ENCODE measurements at regions of chr7 and their contacts with region 1.

Region 1: GRCh38 chr7:50812841-50813475 is 30.3 kb upstream of the GRB10 start:
- DNase-seq: peak; percentile 87 to 90
- H3K4me3 ChIP-seq: no peak overlapping the region
- H3K27ac ChIP-seq: no peak overlapping the region
- H3K4me1 ChIP-seq: peaks cover 12% of the 10 kb centered on the region
- H3K27me3 ChIP-seq: no peaks in the 10 kb centered on the region
- CTCF ChIP-seq: no peak

Region 2: GRCh38 chr7:50147951-50148808 is 664.8 kb before region 1 on chr7:
- CTCF ChIA-PET with region 1: no interaction called
- POLR2A ChIA-PET with region 1: no interaction called
- intact Hi-C with region 1: no loop called
- DNase-seq: no peak
- H3K4me3 ChIP-seq: no peak overlapping the region
- H3K27ac ChIP-seq: no peak overlapping the region
- H3K4me1 ChIP-seq: no peaks in the 10 kb centered on the region
- H3K27me3 ChIP-seq: peaks cover 25% of the 10 kb centered on the region; the same call in 1 of the 2 replicates
- CTCF ChIP-seq: no peak

Region 3: DNA sequence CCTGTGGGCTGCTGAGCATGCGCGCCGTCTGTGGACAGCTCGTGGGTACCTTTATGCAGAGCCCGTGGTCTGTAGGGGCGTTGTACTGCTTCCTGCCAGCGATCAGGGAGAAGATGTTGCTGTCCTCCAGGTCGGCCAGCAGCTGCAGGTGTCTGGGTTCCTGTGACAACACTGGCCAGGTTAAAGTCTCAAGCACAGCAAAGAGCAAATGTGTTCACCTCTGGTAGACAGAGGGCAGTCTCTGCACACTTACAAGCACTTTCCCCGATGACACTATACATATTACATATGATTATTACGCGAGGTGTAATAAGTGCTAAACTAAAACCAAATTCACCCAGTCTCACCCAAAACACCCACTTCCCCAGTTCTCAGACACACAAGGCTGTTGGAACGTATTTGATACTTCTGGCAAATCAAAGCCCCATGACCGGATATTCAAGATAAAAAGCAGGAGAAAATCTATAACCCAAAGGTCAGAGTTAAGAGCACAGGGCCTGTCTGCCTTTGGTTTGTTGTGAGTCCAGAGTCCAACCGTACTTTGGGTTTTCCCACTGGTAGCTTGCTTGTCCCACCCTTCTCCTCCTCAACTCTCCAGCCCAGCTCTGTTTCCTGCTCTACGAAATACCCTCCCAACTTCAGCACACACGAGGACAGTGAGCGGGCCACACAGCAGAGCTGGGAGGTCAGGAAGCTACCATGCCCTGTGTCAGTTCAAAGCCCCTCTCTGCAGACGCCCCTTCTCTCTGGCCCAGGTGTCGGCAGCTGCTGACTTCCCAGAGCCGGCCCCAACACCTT is 198.0 kb before region 1 on chr7:
- CTCF ChIA-PET with region 1: no interaction called
- POLR2A ChIA-PET with region 1: no interaction called
- intact Hi-C with region 1: no loop called
- DNase-seq: no peak
- H3K4me3 ChIP-seq: no peak overlapping the region
- H3K27ac ChIP-seq: no peak overlapping the region
- H3K4me1 ChIP-seq: peaks cover 18% of the 10 kb centered on the region
- H3K27me3 ChIP-seq: no peaks in the 10 kb centered on the region
- CTCF ChIP-seq: peak; percentile 43; the same call in 1 of the 2 replicates

Region 4: DNA sequence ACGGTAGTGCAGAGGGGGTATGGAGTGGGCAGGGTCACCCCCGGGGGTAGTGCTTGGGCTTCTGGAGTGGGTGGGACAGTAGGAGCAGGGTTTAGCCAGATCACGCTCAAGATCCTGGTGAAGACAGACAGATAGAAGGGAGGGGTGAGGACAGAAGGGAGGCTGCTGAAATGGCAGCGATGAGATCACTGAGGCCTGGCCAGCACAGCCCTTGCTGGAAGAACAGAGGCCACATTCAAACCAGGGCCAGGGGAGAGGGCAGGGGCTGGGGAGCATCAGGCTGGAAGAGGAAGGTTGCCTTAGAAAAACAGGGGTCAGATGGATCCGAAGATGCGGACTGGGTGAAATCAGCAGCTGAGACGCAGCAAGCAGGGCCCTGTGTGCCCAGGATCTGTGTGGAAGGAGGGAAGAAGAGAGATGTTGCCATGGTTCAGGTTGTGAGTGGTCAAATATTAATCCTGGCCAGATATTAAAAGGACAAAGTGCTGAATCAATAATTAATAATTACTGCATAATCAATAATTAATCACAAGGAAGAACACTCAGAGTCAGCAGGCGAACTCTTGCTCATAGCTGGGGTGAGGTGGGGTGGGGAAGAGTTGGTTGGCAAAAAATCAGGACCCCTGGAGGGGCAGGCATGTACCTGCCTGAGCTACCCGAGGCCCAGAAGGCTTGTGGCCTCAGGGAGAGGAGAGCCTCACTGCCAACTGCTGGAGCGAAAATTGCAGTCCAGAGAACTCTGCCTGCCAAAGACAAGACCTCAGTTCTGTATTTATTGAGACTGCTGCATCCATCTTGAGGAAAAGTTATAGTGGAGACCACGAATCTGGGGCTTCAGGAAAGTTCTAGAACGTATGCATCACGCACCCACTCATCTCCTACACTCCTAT is 136.0 kb before region 1 on chr7:
- CTCF ChIA-PET with region 1: no interaction called
- POLR2A ChIA-PET with region 1: no interaction called
- intact Hi-C with region 1: no loop called
- DNase-seq: no peak
- H3K4me3 ChIP-seq: no peak overlapping the region
- H3K27ac ChIP-seq: no peak overlapping the region
- H3K4me1 ChIP-seq: peaks cover 4% of the 10 kb centered on the region; the same call in 1 of the 2 replicates
- H3K27me3 ChIP-seq: no peaks in the 10 kb centered on the region
- CTCF ChIP-seq: no peak

Region 5: GRCh38 chr7:50978633-50979215 is 165.8 kb after region 1 on chr7:
- CTCF ChIA-PET with region 1: interaction called, 11 read pairs
- POLR2A ChIA-PET with region 1: no interaction called
- intact Hi-C with region 1: no loop called
- DNase-seq: no peak
- H3K4me3 ChIP-seq: no peak overlapping the region
- H3K27ac ChIP-seq: no peak overlapping the region
- H3K4me1 ChIP-seq: no peaks in the 10 kb centered on the region
- H3K27me3 ChIP-seq: no peaks in the 10 kb centered on the region
- CTCF ChIP-seq: peak; percentile 69

Region 6: DNA sequence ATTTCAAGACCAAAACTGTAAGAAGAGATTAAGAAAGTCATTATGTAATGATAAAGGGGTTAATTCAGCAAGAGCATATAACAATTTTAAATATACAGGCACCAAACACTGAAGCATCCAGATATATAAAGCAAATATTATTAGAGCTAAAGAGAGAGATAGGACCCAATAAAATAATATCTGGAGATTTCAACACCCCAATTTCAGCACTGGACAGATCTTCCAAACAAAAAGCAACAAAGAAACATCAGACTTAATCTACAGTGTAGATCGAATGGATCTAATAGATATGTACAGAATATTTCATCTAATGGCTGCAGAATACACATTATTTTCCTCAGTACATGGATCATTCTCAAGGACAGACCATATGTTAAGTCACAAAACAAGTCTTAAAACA is 352.4 kb after region 1 on chr7:
- CTCF ChIA-PET with region 1: no interaction called
- POLR2A ChIA-PET with region 1: no interaction called
- intact Hi-C with region 1: no loop called
- DNase-seq: no peak
- H3K4me3 ChIP-seq: no peak overlapping the region
- H3K27ac ChIP-seq: no peak overlapping the region
- H3K4me1 ChIP-seq: peaks cover 5% of the 10 kb centered on the region; the same call in 1 of the 2 replicates
- H3K27me3 ChIP-seq: no peaks in the 10 kb centered on the region
- CTCF ChIP-seq: no peak

Measured in PC-9 (cell line).